IMR-90 (cell line): ENCODE measurements at regions of chr1 and their contacts with region 1.

Region 1: DNA sequence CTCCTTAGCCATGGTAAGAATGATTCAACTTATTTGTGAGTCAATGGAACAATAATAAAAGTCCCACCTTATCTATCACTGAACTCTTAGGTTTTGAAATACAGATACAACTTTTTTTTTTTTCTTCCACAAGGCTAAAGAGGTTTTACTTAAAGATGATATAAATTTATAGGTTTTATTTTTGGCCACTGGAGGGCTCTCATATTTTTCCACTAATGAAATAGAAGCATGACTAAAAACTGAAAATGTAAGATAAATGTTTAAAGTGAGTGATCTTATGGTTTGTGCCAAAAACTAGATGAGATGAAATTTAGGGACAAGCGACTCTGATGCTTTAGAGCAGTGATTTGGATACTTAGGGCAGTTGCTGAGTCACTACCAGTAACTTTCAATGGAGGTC is 499.0 kb downstream of the NUF2 start:
- DNase-seq: no peak
- ATAC-seq: no peak
- H3K4me3 ChIP-seq: no peak overlapping the region
- H3K27ac ChIP-seq: no peak overlapping the region
- H3K4me1 ChIP-seq: no peaks in the 10 kb centered on the region
- H3K27me3 ChIP-seq: no peaks in the 10 kb centered on the region
- CTCF ChIP-seq: no peak
- POLR2A ChIP-seq: no peak
- RAD21 ChIP-seq: no peak

Region 2: GRCh38 chr1:163807061-163808049 is 13.4 kb before region 1 on chr1:
- CTCF ChIA-PET with region 1: no interaction called
- POLR2A ChIA-PET with region 1: no interaction called
- dilution Hi-C with region 1: no loop called
- in situ Hi-C with region 1: no loop called
- intact Hi-C with region 1: no loop called
- DNase-seq: no peak
- ATAC-seq: no peak
- H3K4me3 ChIP-seq: no peak overlapping the region
- H3K27ac ChIP-seq: no peak overlapping the region
- H3K4me1 ChIP-seq: no peaks in the 10 kb centered on the region
- H3K27me3 ChIP-seq: no peaks in the 10 kb centered on the region
- CTCF ChIP-seq: no peak
- POLR2A ChIP-seq: no peak
- RAD21 ChIP-seq: no peak

Region 3: GRCh38 chr1:164625001-164625617 is 804.3 kb after region 1 on chr1:
- CTCF ChIA-PET with region 1: no interaction called
- POLR2A ChIA-PET with region 1: no interaction called
- dilution Hi-C with region 1: no loop called
- in situ Hi-C with region 1: no loop called
- intact Hi-C with region 1: loop called (anchors 5 kb)
- DNase-seq: no peak
- ATAC-seq: 0 out of 2 replicates have a peak, but pooled peaks have one; percentile 42
- H3K4me3 ChIP-seq: no peak overlapping the region
- H3K27ac ChIP-seq: no peak overlapping the region
- H3K4me1 ChIP-seq: peaks cover 7% of the 10 kb centered on the region; the same call in 1 of the 2 replicates
- H3K27me3 ChIP-seq: no peaks in the 10 kb centered on the region
- CTCF ChIP-seq: peak; percentile 38
- POLR2A ChIP-seq: no peak
- RAD21 ChIP-seq: peak; percentile 24; the same call in 1 of the 2 replicates